ENCODE measurements at regions of chr20 and their contacts with region 1.

Region 1: DNA sequence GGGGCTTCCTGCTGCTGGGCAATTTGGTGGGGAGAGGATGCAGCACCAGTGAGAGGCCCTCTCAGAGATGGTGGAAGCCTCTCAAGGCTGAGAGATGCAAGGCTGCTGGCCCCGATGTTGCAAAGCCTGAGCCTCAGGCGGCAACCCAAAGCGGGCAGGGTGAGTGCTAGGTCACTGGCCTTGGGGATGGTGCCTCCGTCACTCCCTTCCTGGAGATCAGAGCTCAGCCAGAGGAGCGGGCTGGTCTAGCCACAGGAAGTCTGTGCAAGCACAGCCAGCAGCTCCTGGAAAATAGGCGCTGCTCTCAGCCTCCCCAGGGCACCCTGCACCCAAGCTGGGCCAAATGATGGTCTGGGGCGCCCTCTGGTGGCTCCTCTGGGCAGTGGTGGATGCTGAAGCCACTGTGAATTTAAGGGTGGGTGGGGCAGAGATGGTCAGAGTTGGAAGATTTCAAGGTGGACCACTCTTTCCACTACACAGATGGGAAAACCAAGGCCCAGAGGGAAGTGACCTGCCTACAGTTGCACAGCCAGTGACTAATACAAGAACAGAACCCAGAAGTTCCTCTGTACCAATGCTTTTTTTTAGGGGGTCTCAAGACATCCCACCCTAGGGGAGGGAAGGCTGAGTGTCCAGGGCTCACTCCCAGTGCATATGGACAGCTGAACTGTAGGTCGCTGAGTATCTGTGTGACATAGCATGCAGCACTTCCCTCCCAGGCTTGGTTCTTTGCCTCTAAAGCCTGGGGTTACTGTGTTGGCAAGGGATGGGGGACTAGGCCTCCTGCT is 20.8 kb downstream of the C20orf203 start:
- DNase-seq: peak; percentile 91
- ATAC-seq: peak; percentile 97

Region 2: DNA sequence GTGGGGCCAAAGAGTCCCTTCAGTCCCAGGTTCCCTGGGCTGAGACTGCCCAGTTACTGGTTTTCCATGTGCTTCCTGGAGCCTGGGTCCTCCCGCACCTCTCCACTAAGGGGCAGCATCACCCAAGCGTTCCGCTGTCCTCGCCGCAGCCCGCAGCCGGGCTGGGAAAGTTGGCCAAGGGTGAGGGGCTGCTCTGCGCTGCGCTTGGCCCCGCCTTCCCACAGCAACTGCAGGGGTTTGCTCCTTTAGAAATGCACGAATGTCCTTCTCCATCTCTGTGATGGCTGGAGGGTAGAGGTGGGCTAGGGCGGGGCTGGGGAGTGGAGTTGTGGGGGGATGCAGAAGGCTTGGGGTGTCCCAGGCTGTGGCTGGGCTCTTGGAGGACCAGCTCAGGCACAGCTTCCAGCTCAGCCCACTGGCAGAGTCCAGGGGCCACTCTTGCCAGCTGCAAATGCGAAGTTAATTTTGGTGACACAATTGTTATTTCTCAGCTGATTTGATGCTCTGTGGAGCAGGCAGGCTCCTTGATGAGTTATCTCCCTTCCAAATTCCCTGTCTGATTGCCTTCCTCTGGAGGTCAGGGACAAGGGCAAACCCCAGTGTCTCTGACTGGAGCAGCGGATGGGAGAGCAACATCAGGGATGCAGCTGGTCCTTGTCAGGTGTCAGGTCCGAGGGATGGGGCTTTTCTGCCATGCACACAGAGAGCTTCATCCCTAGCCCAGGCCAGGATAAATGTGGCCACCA is 131.0 kb before region 1 on chr20:
- intact Hi-C with region 1: loop called (anchors 5 kb)
- DNase-seq: peak; percentile 80
- ATAC-seq: peak; percentile 85

Region 3: DNA sequence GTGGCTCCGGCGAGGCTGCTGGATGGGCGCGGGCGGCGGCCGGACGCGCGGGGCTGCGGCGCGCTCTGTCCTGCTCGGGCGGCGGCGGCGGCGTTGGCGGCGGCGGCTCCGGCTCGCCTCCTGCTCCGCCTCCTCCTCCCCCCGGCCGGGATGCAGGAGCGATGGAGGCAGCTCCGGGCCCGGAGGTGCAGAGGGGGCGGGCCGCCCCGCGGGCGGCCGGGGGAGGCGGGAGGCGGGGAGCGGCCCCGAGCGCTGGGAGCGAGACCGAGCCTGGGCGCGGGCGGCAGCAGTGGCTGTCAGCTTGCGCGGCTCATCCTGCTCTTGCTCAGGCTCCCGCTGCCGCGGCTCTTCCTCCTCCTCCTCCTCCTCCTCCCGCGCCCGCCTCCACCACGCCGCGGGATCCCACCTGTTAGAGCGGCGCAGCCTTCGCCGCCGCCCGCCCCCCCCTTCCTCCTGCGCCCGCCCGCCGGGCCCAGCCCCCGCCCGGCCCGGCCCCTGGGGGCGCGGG is 67.9 kb before region 1 on chr20 and contains the start of gene NOL4L:
- intact Hi-C with region 1: loop called (anchors 10 kb)
- DNase-seq: no peak
- ATAC-seq: no peak
- total RNA-seq, gene NOL4L: 39.4 TPM

Region 4: GRCh38 chr20:32610472-32611218 is 42.3 kb before region 1 on chr20:
- intact Hi-C with region 1: no loop called
- DNase-seq: no peak
- ATAC-seq: no peak